ENCODE measurements at regions of chr5 and their contacts with region 1.

Region 1: DNA sequence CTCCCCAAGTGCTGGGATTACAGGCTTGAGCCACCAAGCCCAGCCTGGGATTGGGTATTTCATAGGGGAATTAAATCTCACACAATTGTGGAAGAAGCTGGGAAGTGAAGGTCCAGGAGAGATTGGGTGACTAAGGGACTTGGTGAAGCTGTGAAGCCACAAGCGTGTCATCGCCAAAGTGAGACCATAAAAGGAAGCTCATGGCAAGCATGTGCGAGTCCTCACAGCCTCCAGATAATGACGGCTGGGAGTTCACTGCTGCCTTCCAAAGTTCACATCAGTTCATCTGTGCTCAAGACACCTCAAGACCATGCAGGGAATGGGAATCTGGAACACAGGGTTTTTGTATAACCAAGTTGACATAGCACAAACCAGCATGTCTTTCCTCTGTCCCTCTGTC is 210.6 kb downstream of the MARCHF11 start:
- DNase-seq: no peak
- ATAC-seq: peak in 2 of 8 donors; percentile 37 to 38
- H3K4me3 ChIP-seq: no peak overlapping the region
- H3K27ac ChIP-seq: no peak overlapping the region
- H3K4me1 ChIP-seq: peaks cover 0 to 7% (median 0%) of the 10 kb centered on the region in 9 donors
- H3K27me3 ChIP-seq: no peaks in the 10 kb centered on the region
- CTCF ChIP-seq: no peak

Region 2: GRCh38 chr5:15807871-15808270 is 161.1 kb before region 1 on chr5:
- intact Hi-C with region 1: no loop called
- DNase-seq: peak in 1 of 2 donors; percentile 64
- ATAC-seq: peak; percentile 87 to 97 (median 91)
- H3K4me3 ChIP-seq: no peak overlapping the region
- H3K27ac ChIP-seq: peak overlapping the region in 8 of 10 donors; percentile 2 to 68 (median 54)
- H3K4me1 ChIP-seq: peaks cover 0 to 34% (median 23%) of the 10 kb centered on the region in 9 donors
- H3K27me3 ChIP-seq: no peaks in the 10 kb centered on the region
- CTCF ChIP-seq: peak in 6 of 9 donors; percentile 28 to 61 (median 44)

Region 3: GRCh38 chr5:15914638-15915037 is 54.4 kb before region 1 on chr5:
- intact Hi-C with region 1: no loop called
- DNase-seq: no peak
- ATAC-seq: peak in 7 of 8 donors; percentile 43 to 78 (median 64)
- H3K4me3 ChIP-seq: peak overlapping the region in 8 of 10 donors; percentile 6 to 41 (median 24)
- H3K27ac ChIP-seq: peak overlapping the region in 7 of 10 donors; percentile 1 to 63 (median 19)
- H3K4me1 ChIP-seq: peaks cover 0 to 25% (median 11%) of the 10 kb centered on the region in 9 donors
- H3K27me3 ChIP-seq: no peaks in the 10 kb centered on the region
- CTCF ChIP-seq: no peak

Region 4: DNA sequence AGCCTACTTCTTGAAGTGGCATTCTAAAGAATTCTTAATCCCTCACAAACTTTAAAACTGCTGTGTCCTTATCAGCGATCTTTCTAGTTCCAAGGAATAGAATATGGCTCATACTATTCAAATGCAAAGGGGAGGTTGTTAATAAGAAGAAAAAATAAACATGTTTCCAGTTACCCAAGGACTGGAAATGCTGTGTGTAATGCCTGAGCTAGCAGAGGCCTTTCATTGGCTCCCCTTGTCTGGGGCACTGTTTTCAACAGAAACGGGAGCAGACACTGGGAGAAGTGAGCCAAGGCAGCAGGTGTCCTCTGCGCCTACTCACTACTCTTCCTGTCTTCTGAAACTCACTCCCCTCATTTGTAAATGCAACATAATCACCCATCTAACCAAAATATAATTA is 42.4 kb before region 1 on chr5:
- intact Hi-C with region 1: loop called in 1 of 10 experiments (anchors 2 kb)
- DNase-seq: no peak
- ATAC-seq: no peak
- H3K4me3 ChIP-seq: no peak overlapping the region
- H3K27ac ChIP-seq: no peak overlapping the region
- H3K4me1 ChIP-seq: peaks cover 0 to 7% (median 0%) of the 10 kb centered on the region in 9 donors
- H3K27me3 ChIP-seq: no peaks in the 10 kb centered on the region
- CTCF ChIP-seq: no peak